ENCODE measurements at regions of chr10 and their contacts with region 1.

Region 1: GRCh38 chr10:99993701-99994689 is 15.8 kb downstream of the DNMBP start:
- DNase-seq: peak; percentile 51
- ATAC-seq: peak; percentile 98
- H3K4me3 ChIP-seq: peak overlapping the region; percentile 4; the same call in 1 of the 2 replicates
- H3K27ac ChIP-seq: peak overlapping the region; percentile 42
- H3K4me1 ChIP-seq: peaks cover 23% of the 10 kb centered on the region
- H3K27me3 ChIP-seq: no peaks in the 10 kb centered on the region
- CTCF ChIP-seq: no peak
- EP300 ChIP-seq: no peak
- POLR2A ChIP-seq: 0 out of 2 replicates have a peak, but pooled peaks have one; percentile 24
- RAD21 ChIP-seq: no peak

Region 2: DNA sequence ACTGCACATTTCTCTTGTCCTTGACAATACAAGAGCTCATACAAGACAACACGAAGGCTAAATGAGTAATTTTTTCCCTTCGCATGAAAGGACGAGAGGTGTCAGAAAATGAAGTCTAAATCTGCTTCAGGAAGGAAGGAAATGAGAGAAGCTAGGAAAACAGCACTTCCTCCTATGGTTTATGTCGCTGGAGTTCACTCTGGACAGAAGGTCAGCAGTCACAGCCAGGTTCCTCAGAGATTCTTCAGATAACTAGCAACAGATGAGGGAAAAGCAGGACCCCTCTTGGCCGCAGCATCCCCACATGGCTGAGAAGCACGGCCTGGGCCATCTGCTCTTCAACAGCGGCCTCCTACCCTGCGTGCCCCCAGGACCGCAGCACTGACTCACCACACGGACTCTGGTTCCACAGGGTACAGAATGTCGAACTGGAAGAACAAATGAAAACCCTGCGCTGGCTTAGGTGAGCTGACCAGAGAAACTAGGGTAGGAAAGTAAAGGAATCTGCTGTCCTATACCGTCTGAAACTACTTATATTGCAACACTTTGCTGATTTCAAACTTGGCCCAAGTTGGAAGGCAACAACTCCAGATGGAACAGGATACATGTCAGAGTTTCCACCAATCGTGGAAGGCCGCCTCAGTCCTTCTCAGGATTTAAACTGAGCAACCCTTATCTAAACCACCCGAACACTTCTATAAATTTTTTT is 10.6 kb before region 1 on chr10:
- CTCF ChIA-PET with region 1: interaction called, 13 read pairs
- POLR2A ChIA-PET with region 1: interaction called, 36 read pairs
- RAD21 ChIA-PET with region 1: interaction called, 20 read pairs
- SMC1A ChIA-PET with region 1: interaction called, 531 read pairs
- in situ Hi-C with region 1: no loop called
- intact Hi-C with region 1: no loop called
- DNase-seq: peak; percentile 48
- ATAC-seq: peak; percentile 86
- H3K4me3 ChIP-seq: peak overlapping the region; percentile 57; the same call in 1 of the 2 replicates
- H3K27ac ChIP-seq: peak overlapping the region; percentile 90
- H3K4me1 ChIP-seq: peaks cover 63% of the 10 kb centered on the region
- H3K27me3 ChIP-seq: no peaks in the 10 kb centered on the region
- CTCF ChIP-seq: no peak
- EP300 ChIP-seq: no peak
- POLR2A ChIP-seq: 0 out of 2 replicates have a peak, but pooled peaks have one; percentile 25
- RAD21 ChIP-seq: no peak